ENCODE measurements at regions of chr22 and their contacts with region 1.

Region 1: GRCh38 chr22:26398741-26399153 is 30.3 kb upstream of the ASPHD2 start:
- DNase-seq: peak; percentile 82

Region 2: DNA sequence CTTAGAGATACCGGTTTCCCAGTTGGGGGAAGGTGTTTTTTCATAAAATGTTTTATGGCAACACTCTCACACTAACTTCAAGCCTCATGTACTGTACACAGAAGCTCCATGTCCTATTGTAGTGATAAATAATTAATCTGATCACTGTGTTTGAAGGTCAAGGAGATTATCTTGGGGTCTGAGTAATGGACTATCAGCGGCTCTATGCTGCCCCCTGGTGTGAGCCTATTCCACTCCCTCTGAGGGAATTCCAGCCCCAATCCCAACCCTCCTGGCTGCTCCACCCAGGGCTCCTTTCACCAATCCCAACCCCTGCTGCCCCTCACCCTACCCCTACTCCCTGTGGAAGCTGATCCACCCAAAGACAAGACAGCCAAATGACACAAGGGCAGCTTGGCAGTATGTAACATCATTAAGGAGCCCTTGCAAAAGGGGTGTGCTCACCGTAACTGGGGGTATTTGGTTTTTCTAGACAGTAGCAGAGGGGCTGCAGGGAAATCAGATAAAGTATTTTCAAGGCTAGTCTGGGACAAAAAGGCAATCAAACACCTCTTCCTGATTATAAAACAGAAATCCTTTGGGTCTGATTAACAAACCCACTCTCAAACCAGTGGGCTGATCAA is 62.6 kb after region 1 on chr22:
- intact Hi-C with region 1: loop called (anchors 5 to 10 kb)
- DNase-seq: no peak

Measured in posterior vena cava (tissue), 2 donors.